ENCODE measurements at regions of chr17 and their contacts with region 1.

Region 1: DNA sequence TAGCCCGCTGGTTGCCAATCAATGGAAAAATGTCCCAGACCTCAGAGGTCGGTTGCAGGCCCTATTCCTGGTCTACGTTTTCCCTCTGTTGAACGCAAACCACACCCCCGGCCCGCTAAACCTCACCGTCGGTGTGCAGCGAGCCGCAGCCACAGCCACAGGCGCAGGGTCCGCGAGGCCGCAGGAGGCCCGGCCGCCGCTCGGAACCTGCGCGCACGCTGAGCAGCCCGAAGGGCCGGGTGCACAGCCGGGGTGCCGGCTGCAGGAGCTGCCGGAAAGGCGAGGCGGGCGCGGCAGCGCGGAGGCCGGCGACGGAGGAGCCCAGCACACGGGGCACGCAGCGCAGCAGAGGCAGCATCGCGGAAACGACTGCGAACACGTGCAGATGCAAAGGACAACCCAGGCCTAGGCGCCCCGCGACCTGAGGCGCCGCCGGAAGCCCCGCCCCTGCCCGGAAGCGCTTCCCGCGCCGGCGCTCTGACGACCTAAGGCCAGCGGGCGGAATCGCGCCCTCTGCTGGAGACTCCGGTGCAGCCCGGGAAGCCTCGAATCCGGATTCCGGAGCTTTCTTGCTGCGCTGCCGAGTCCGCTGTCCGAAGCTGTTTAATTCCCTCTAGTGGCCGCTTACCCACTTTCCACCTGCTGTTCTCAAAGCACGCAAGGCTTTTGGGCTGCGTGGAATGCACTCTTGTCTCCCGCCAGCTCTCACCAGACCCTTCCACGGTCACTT is at the start of gene C1QBP:
- DNase-seq: peak; percentile 90
- H3K4me3 Mint-ChIP-seq: peak within 1 kb of the TSS; percentile 90
- H3K27ac Mint-ChIP-seq: peak within 1 kb of the TSS; percentile 82
- H3K4me1 Mint-ChIP-seq: peaks cover 36% of the 10 kb centered on the region
- H3K27me3 Mint-ChIP-seq: no peaks in the 10 kb centered on the region
- total RNA-seq, gene C1QBP: 363 and 372 TPM in 2 replicates

Region 2: DNA sequence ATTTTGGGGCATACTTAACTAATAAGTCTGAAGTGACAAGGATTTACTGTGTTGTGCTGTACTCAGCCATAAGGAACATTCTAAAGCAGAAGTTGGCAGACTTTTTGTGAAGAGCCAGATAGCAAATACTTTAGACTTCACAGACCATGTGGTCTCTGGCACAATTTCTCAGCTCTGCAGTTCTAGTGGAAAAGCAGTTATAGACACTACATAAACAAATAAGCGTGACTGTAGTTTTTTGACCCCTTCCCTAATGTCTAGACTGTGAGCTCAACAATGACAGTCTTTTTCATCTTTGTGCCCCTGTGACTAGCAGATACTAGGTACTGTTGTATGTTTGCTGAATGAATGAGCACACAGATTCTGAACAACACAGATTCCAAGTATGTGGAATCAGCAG is 14.0 kb before region 1 on chr17:
- intact Hi-C with region 1: no loop called
- DNase-seq: no peak
- H3K4me3 Mint-ChIP-seq: no peak overlapping the region
- H3K27ac Mint-ChIP-seq: no peak overlapping the region
- H3K4me1 Mint-ChIP-seq: peaks cover 30% of the 10 kb centered on the region
- H3K27me3 Mint-ChIP-seq: no peaks in the 10 kb centered on the region

Region 3: DNA sequence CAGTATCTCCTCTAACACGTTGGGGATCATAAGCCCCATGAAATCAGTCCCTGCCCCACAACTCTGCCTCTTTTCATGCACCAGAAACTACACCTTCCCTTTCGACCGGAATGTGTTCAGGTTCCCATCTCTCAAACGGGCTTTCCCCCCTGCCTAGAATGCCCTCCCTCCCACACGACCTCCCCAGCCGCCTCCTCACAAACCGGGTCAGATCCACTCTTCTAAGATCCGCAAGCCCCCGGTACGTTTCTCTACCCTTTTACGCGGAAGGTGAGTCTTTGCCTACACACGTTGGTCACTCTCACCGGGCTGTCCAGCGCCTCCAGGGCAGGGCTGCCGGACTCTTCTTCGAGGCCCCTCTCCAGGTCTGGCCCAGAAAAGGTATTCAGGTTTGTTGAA is 29.2 kb after region 1 on chr17:
- intact Hi-C with region 1: loop called (anchors 1 kb)
- DNase-seq: no peak
- H3K4me3 Mint-ChIP-seq: peak overlapping the region; percentile 95
- H3K27ac Mint-ChIP-seq: peak overlapping the region; percentile 44
- H3K4me1 Mint-ChIP-seq: peaks cover 39% of the 10 kb centered on the region
- H3K27me3 Mint-ChIP-seq: no peaks in the 10 kb centered on the region

Measured in activated T-helper 2 cell treated with anti-CD3 and anti-CD28 coated beads, Interferon-gamma antibody, Interleukin-2, Interleukin-4, amounts not matched to agents 10 μg/mL and 5 μg/mL and 100 μg/mL, durations not matched to agents 14 hours and 24 hours and 36 hours (primary cell).